ENCODE measurements at regions of chr7 and their contacts with region 1.

Region 1: DNA sequence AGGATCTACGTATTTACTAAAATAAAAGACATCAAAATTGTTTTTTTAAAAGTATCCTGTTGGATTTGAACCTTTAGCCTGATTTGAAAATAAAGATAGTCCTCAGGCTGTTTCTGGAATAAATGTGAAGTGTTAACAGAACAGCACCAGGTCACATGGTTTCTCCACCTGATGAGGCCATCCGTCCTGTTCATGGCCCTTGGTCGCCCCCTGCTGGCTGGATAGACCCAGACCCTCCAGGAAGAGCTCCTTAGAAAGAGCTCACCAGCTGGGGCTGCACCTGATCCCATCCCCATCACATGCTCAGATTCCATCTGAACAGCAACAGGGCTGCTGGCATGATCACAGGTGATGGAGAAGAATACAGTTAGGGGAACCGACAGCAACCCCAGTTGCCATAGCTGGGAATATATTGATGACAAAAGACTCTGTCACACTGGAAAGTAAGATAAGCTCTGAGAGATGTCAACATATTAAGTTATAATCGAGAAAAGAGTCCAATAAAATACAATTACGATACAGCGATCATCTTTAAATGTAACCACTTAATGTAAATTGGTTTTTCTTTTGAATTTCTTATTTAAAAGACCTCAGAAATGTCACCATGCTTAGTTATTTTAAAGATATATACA is 4.8 kb downstream of the OR2A14 start:
- DNase-seq: peak; percentile 92
- H3K4me3 Mint-ChIP-seq: no peak overlapping the region
- H3K27ac Mint-ChIP-seq: no peak overlapping the region
- H3K4me1 Mint-ChIP-seq: no peaks in the 10 kb centered on the region
- H3K27me3 Mint-ChIP-seq: peaks cover 3% of the 10 kb centered on the region

Region 2: DNA sequence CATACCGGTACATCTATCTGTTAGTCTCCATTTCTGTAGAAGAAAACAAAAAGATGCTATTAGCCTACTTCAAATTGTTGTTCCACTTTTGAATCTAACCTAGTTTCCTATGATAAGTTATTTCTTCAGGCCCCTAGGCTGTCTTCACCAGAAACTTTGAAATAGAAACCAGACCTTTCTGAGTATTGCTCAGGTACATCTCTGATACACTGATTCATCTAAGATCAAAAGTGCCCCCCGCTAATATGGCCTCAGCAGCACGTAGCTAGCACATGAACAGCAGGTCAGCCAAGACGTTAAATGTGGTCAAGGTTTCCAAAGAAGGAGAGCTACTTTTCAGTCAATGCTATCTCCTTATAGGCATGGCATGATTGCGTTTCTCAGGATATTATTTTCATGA is 393.9 kb before region 1 on chr7:
- CTCF ChIA-PET with region 1: interaction called, 14 read pairs
- POLR2A ChIA-PET with region 1: no interaction called
- intact Hi-C with region 1: no loop called
- DNase-seq: no peak
- H3K4me3 Mint-ChIP-seq: no peak overlapping the region
- H3K27ac Mint-ChIP-seq: no peak overlapping the region
- H3K4me1 Mint-ChIP-seq: peaks cover 27% of the 10 kb centered on the region
- H3K27me3 Mint-ChIP-seq: no peaks in the 10 kb centered on the region

Region 3: DNA sequence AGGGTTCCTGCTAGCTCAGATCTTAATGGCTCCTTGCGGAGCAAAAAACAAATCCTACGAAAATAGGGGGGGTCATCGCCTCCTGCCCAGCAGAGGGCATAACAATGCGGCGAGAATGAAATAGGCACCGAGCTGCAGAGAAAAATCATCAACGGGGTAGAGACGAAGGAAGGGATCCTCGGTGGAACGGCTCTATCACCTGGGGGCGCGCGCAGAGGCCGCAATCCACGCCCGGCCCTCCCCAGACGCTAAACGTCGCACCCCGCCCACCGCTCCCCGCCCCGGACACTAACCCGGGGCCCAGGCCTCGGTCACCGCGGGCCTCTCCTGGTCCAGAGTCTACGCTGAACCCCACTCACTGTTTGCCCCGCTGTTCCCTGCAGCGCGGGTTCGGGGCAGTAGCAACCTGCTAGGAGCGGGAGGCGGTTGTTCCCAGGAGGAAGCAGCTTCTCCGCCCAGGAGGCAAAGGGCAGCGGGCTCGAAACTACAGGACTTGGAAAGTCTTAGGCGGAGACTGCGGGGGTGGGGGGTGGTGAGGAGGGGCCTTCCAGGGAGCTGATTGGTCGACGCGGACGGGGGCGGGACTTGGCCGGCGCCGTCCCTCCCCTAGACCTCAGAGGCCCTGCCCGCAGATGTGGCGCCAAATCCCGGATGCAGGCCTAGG is 226.0 kb before region 1 on chr7 and contains the start of gene TCAF1:
- CTCF ChIA-PET with region 1: interaction called, 26 read pairs
- POLR2A ChIA-PET with region 1: interaction called, 3 read pairs
- intact Hi-C with region 1: loop called (anchors 1 kb)
- DNase-seq: peak; percentile 95
- H3K4me3 Mint-ChIP-seq: peak within 1 kb of the TSS; percentile 86
- H3K27ac Mint-ChIP-seq: peak within 1 kb of the TSS; percentile 80
- H3K4me1 Mint-ChIP-seq: peaks cover 25% of the 10 kb centered on the region
- H3K27me3 Mint-ChIP-seq: no peaks in the 10 kb centered on the region
- total RNA-seq, gene TCAF1: 25.8 to 26.1 TPM

Region 4: GRCh38 chr7:144001543-144001942 is 126.3 kb before region 1 on chr7:
- CTCF ChIA-PET with region 1: no interaction called
- POLR2A ChIA-PET with region 1: no interaction called
- intact Hi-C with region 1: no loop called
- DNase-seq: no peak
- H3K4me3 Mint-ChIP-seq: no peak overlapping the region
- H3K27ac Mint-ChIP-seq: no peak overlapping the region
- H3K4me1 Mint-ChIP-seq: no peaks in the 10 kb centered on the region
- H3K27me3 Mint-ChIP-seq: peaks cover 8% of the 10 kb centered on the region

Region 5: DNA sequence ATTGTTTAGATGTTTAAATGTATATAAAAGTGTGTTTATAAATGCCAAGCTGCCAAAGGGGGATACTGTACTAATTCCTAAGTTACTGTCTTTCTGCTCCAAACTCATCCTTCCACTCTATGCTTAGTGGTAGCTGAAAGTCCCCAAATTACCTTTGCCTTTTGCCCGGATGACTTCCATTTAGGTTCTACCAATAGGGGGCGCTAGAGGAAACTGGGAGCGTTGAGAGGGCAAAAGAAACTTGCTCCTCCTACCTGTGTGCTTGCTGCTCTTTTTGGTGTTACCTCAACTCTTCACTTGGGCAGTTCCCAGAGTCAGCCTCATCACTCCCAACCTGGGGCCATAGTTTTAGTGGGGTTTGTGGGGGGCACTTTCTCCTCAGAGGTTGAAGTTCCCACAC is 64.1 kb before region 1 on chr7:
- CTCF ChIA-PET with region 1: interaction called, 14 read pairs
- POLR2A ChIA-PET with region 1: no interaction called
- intact Hi-C with region 1: no loop called
- DNase-seq: no peak
- H3K4me3 Mint-ChIP-seq: no peak overlapping the region
- H3K27ac Mint-ChIP-seq: no peak overlapping the region
- H3K4me1 Mint-ChIP-seq: no peaks in the 10 kb centered on the region
- H3K27me3 Mint-ChIP-seq: peaks cover 13% of the 10 kb centered on the region